Left cardiac atrium (tissue), 4 donors: ENCODE measurements at regions of chr2 and their contacts with region 1.

Region 1: DNA sequence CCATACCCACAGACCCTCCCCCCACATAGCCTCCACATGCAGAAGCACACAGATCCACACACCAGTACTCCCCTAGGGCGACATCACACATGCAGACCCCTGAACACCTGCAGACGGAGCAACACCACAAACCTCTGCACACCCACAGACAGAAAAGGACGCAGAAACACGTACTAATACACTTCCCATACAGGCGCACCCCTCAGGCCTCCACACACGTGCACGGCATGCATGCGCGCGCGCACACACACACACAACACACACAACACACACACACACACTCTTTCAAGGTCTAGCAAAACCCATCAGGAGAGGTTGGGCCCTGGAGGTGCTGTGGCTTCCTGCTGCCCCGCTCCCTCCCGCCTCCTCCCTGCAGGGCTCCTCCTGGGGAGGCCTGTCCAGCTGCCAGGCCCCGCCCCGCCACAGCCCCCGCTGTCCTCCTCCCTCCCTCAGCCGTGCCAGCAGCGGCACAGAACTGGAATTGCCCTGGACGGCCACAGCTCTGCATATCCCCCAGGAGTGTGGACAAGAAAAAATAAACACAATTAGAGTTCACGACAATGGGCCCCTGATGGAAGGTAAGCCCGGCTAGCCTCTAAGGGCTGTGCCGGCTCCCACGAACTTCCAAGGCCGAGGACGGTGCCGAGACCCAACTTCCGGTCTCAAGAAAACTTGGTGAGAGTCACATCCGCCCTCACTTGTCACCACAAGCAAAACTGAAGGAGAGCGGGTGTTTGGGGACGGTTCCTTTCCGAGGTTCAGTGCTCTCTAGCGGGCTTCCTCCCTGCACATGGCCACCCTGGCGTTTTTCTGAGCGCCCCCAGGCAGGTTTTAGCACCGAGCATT is 6.8 kb downstream of the ZFP36L2 start:
- DNase-seq: peak; percentile 90
- ATAC-seq: peak; percentile 75 to 79

Region 2: DNA sequence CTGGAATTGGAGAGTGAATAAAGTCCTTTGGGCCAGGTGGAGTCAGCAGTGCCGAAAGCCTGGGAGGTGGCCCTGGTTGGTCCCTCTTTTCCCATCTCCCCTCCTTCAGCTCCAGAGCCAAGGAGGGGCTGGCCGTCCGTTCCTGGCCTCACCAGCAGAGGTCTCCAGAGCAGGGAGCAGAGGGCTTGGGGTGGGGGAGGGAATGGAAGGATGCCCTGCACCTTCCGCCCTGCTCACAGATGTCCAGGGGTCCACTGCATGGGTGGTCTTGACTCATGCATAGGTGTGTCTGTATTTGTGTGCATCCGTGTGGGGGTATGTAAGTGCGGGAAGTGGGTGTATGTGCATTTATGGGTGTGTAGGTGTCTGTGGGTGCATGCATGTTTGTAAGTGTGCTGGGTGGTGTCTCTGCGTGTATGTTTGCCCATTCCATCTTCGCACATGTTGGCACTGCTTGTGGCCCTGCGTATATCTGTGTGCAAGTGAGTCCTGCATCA is 195.0 kb before region 1 on chr2:
- intact Hi-C with region 1: loop called in 1 of 2 experiments (anchors 10 kb)
- DNase-seq: peak; percentile 73
- ATAC-seq: peak; percentile 71 to 79

Region 3: GRCh38 chr2:43159797-43160196 is 59.8 kb before region 1 on chr2:
- intact Hi-C with region 1: loop called in 1 of 2 experiments (anchors 5 kb)
- DNase-seq: no peak
- ATAC-seq: no peak

Region 4: DNA sequence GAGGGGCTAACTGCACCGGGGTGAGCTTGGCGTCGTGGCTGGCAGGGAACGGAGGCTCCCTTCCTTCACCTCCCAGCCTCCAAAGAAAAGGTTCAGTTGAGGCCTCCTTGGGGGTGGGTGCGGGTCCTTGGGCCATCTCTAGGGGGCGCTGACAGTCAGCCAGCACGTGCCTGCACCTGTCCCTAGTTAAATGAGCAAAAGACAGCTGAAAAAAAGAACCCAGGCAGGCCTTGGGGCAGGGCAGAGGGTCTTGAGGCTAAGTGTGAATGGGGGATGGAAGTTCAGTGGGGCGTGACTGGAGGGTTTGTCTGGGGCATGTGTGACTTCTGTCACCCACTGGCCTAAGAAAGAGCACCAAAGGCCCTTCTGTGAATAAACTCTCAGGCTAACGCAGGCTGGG is 49.6 kb before region 1 on chr2:
- intact Hi-C with region 1: loop called (anchors 5 kb)
- DNase-seq: no peak
- ATAC-seq: peak; percentile 8 to 16

Region 5: DNA sequence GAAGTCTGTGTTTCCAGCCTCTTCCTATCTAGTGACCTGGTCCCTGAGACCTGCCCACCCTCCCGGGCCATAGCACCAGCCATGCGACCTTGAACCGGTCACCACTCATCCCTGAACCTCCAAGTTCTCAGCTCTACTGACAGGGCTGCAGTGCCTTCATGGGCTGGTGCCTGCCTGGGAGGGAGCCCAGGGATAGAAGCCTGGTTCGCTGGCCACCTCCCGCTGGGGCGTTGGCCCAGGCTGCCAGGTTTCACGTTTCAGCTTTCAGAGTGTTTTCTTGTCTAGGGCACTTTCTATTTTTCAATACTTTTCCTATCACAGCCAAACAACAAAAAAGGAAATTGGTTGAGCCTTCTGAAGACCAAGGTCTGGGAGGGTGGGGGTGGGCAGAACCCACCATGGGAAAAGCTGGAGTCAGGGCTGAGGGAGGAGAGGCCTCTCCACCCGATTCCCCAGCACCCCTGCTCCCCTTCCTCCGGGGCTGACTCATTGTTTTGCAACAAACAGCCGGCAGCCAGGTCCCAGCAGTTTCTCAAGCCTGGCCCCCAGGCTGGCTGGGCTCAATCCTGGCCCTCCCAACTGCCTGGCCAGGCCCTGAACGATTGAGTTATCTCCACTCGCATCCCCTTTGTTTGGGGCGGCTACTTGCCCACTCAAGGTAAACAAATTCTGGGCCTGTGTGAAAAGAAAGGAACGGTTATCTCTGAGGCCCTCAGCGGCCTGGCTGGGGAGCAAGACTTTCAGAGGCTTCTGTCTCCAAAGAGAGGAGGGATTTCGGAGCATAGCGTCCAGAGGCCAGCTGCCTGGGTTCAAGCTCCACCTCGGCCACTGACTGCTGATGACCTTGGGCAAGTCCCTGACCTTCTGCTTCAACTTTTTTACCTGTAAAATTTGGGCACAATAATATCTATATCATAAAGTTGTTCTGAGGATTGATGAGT is 40.7 kb before region 1 on chr2:
- intact Hi-C with region 1: loop called (anchors 5 kb)
- DNase-seq: peak; percentile 84
- ATAC-seq: peak; percentile 87 to 92

Region 6: GRCh38 chr2:43408407-43409160 is 189.0 kb after region 1 on chr2:
- intact Hi-C with region 1: no loop called
- DNase-seq: no peak
- ATAC-seq: peak; percentile 39 to 43